ENCODE measurements at regions of chr1 and their contacts with region 1.

Region 1: GRCh38 chr1:171644805-171645483 is 7.5 kb downstream of the MYOC start:
- DNase-seq: peak; percentile 65
- ATAC-seq: peak; percentile 91
- H3K4me3 ChIP-seq: peak overlapping the region in 1 of 2 experiments; percentile 15; a peak in 1 of 4 replicates
- H3K27ac ChIP-seq: no peak overlapping the region
- H3K4me1 ChIP-seq: 0 out of 2 replicates have a peak, but pooled peaks cover 2% of the 10 kb centered on the region
- H3K27me3 ChIP-seq: no peaks in the 10 kb centered on the region
- CTCF ChIP-seq: peak; percentile 89

Region 2: GRCh38 chr1:171715813-171716251 is 70.9 kb after region 1 on chr1:
- CTCF ChIA-PET with region 1: interaction called, 22 read pairs
- POLR2A ChIA-PET with region 1: no interaction called
- in situ Hi-C with region 1: no loop called
- intact Hi-C with region 1: loop called (anchors 5 kb)
- DNase-seq: no peak
- ATAC-seq: no peak
- H3K4me3 ChIP-seq: no peak overlapping the region
- H3K27ac ChIP-seq: no peak overlapping the region
- H3K4me1 ChIP-seq: no peaks in the 10 kb centered on the region
- H3K27me3 ChIP-seq: no peaks in the 10 kb centered on the region
- CTCF ChIP-seq: peak; percentile 62

Region 3: GRCh38 chr1:171772312-171772711 is 127.4 kb after region 1 on chr1:
- CTCF ChIA-PET with region 1: no interaction called
- POLR2A ChIA-PET with region 1: no interaction called
- in situ Hi-C with region 1: no loop called
- intact Hi-C with region 1: loop called (anchors 10 kb)
- DNase-seq: no peak
- ATAC-seq: no peak
- H3K4me3 ChIP-seq: no peak overlapping the region
- H3K27ac ChIP-seq: no peak overlapping the region
- H3K4me1 ChIP-seq: no peaks in the 10 kb centered on the region
- H3K27me3 ChIP-seq: no peaks in the 10 kb centered on the region; the same call in 1 of the 2 replicates
- CTCF ChIP-seq: no peak

Region 4: DNA sequence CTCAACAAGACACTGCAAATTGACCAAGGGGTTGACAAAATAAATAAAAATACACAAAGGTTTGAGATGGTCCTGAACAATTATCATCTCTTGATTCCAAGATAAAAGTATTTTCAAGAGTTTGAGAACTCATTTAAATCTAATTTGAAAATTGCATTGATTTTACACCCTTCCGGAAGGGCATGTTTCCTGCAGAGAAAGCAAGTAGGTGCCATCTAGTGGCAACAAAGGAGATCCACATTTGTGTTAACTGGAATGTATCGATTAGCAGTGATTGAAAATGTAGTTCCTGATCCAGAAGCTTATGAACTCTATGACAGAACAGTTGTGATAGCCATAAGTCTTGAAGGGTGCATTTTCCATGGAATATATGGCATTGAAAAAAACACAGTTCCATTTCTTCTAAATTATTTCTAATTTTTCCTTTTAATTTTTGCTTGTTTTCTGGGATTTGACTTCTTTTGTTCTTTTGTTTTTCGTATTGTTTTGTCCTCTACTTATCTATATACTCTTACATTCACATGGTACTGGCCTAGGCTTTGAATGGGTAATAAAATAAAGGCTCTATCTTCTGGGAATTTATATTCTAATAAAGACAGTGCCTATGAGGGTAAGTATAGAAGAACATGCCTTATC is 340.0 kb after region 1 on chr1:
- CTCF ChIA-PET with region 1: no interaction called
- POLR2A ChIA-PET with region 1: no interaction called
- in situ Hi-C with region 1: no loop called
- intact Hi-C with region 1: loop called (anchors 5 kb)
- DNase-seq: no peak
- ATAC-seq: peak; percentile 68; the same call in 1 of the 2 replicates
- H3K4me3 ChIP-seq: no peak overlapping the region
- H3K27ac ChIP-seq: peak overlapping the region; percentile 32; the same call in 1 of the 2 replicates
- H3K4me1 ChIP-seq: 0 out of 2 replicates have a peak, but pooled peaks cover 6% of the 10 kb centered on the region
- H3K27me3 ChIP-seq: no peaks in the 10 kb centered on the region
- CTCF ChIP-seq: peak; percentile 73; the same call in 1 of the 2 replicates